Panc1 (cell line): ENCODE measurements at regions of chr5 and their contacts with region 1.

Region 1: GRCh38 chr5:43926923-43927322 is 323.9 kb downstream of the NNT start:
- DNase-seq: no peak
- ATAC-seq: no peak
- H3K4me3 ChIP-seq: no peak overlapping the region
- H3K27ac ChIP-seq: no peak overlapping the region
- H3K4me1 ChIP-seq: no peaks in the 10 kb centered on the region
- H3K27me3 ChIP-seq: no peaks in the 10 kb centered on the region
- CTCF ChIP-seq: no peak

Region 2: GRCh38 chr5:43947870-43948269 is 20.9 kb after region 1 on chr5:
- CTCF ChIA-PET with region 1: no interaction called
- POLR2A ChIA-PET with region 1: no interaction called
- in situ Hi-C with region 1: no loop called
- intact Hi-C with region 1: no loop called
- DNase-seq: no peak
- ATAC-seq: no peak
- H3K4me3 ChIP-seq: no peak overlapping the region
- H3K27ac ChIP-seq: no peak overlapping the region
- H3K4me1 ChIP-seq: no peaks in the 10 kb centered on the region
- H3K27me3 ChIP-seq: no peaks in the 10 kb centered on the region
- CTCF ChIP-seq: no peak

Region 3: GRCh38 chr5:44312374-44312773 is 385.5 kb after region 1 on chr5:
- CTCF ChIA-PET with region 1: no interaction called
- POLR2A ChIA-PET with region 1: no interaction called
- in situ Hi-C with region 1: no loop called
- intact Hi-C with region 1: loop called (anchors 10 kb)
- DNase-seq: no peak
- ATAC-seq: no peak
- H3K4me3 ChIP-seq: no peak overlapping the region
- H3K27ac ChIP-seq: no peak overlapping the region
- H3K4me1 ChIP-seq: no peaks in the 10 kb centered on the region
- H3K27me3 ChIP-seq: no peaks in the 10 kb centered on the region; the same call in 1 of the 2 replicates
- CTCF ChIP-seq: no peak